ENCODE measurements at regions of chr2 and their contacts with region 1.

Region 1: DNA sequence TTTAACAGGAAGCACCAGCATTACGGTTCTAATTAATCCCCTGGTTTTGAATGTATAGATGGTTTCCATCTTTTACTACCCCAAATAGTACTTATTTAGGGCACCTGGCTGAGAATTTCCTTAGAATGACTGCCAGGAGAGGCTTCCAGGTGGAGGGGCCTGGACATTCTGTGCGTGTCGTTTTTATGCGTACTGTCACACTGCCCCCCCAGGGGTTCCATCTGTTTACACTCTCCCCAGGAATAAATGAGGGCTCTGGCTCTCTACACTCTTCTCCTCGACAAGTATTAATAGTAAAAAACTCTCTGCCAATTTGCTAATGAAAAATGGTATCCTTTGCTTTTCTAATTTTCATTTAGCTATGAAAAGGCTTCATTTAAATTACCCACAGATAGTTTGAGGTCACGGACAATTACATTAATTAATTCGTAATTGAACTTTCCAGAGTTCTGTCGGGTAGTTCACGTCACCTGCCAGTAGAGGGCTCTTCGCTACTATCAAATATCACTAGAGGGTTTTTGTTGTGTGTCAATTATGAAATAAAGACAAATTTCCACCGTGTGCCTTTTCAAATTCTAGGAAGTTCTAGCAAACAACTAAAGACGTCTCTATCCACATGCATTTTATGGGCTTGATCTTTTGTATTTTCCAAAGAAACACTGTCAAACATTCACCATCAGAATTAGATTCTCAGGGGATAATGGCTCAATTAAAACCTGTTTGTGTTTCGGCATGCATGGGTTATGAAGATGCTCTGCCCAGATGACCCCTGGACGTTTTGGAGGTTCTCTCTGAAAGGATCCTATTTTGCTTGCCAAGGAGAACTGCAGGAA is 88.8 kb upstream of the ASB18 start:
- DNase-seq: peak in 1 of 3 donors; percentile 22
- H3K4me3 ChIP-seq: no peak overlapping the region
- H3K4me3 Mint-ChIP-seq: no peak overlapping the region
- H3K27ac ChIP-seq: no peak overlapping the region
- H3K27ac Mint-ChIP-seq: no peak overlapping the region
- H3K4me1 ChIP-seq: no peaks in the 10 kb centered on the region
- H3K4me1 Mint-ChIP-seq: peaks cover 3% of the 10 kb centered on the region
- H3K27me3 ChIP-seq: no peaks in the 10 kb centered on the region
- H3K27me3 Mint-ChIP-seq: peaks cover 5 to 12% (median 7%) of the 10 kb centered on the region in 3 donors
- CTCF ChIP-seq: peak; percentile 86

Region 2: DNA sequence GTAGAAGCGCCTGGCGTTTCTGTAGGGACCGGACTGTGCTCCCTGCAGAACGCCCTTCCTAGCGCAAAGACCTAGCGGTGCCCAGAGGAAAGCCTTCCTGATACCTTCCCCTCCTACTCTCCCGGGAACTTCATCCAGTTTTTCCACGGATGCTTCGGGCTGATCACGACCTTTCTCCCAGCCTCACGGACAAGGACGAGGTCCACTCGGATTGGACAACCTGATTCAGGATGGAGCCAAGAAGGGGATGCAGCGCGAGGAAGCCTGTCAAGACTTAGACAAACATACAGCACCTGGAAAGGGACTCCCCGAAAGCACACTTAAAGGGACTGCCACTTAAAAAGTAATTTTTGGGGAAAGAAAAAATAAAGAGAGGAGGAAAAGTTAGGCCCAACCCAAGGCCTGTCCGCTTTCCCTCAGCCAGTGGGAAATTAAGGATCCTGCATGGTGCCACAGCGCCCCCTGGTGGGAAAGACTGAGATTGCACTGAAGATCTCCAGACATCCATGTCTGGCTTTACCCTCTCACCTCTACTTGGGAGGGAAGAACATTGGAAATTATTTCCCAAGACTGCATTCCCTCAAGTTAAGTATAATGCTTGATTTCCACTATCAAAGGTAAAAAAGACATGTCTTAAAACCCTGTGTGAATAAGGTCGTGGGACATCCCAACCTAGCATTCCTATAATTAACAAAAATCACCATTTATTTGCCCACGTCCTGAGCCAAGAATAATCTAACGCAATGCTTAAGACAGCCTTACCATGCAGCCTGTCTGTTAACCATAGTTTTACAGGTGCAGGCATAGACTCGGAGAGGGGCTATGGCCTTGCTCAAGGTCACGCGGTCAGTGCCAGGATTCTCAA is 719.3 kb after region 1 on chr2:
- intact Hi-C with region 1: loop called (anchors 2 to 5 kb)
- DNase-seq: peak; percentile 46 to 59 (median 56)
- H3K4me3 ChIP-seq: no peak overlapping the region
- H3K4me3 Mint-ChIP-seq: no peak overlapping the region
- H3K27ac ChIP-seq: no peak overlapping the region
- H3K27ac Mint-ChIP-seq: peak overlapping the region in 1 of 7 donors; percentile 4
- H3K4me1 ChIP-seq: no peaks in the 10 kb centered on the region
- H3K4me1 Mint-ChIP-seq: peaks cover 9% of the 10 kb centered on the region
- H3K27me3 ChIP-seq: no peaks in the 10 kb centered on the region
- H3K27me3 Mint-ChIP-seq: peaks cover 0 to 1% (median 0%) of the 10 kb centered on the region in 3 donors
- CTCF ChIP-seq: peak; percentile 99